ENCODE measurements at regions of chr1 and their contacts with region 1.

Region 1: GRCh38 chr1:214637722-214638458 is 34.9 kb downstream of the CENPF start:
- DNase-seq: peak; percentile 46
- H3K4me3 ChIP-seq: no peak overlapping the region
- H3K27ac ChIP-seq: no peak overlapping the region
- H3K4me1 ChIP-seq: peaks cover 5% of the 10 kb centered on the region
- H3K27me3 ChIP-seq: no peaks in the 10 kb centered on the region
- CTCF ChIP-seq: peak; percentile 61 to 81

Region 2: GRCh38 chr1:214224611-214225354 is 413.1 kb before region 1 on chr1:
- CTCF ChIA-PET with region 1: no interaction called
- dilution Hi-C with region 1: no loop called
- in situ Hi-C with region 1: loop called in 1 of 2 experiments (anchors 25 kb)
- intact Hi-C with region 1: no loop called
- DNase-seq: no peak
- H3K4me3 ChIP-seq: peak overlapping the region in 1 of 3 experiments; percentile 26
- H3K27ac ChIP-seq: no peak overlapping the region
- H3K4me1 ChIP-seq: peaks cover 7% of the 10 kb centered on the region
- H3K27me3 ChIP-seq: no peaks in the 10 kb centered on the region
- CTCF ChIP-seq: no peak

Region 3: GRCh38 chr1:214537219-214537618 is 100.7 kb before region 1 on chr1:
- CTCF ChIA-PET with region 1: no interaction called
- dilution Hi-C with region 1: no loop called
- in situ Hi-C with region 1: no loop called
- intact Hi-C with region 1: no loop called
- DNase-seq: peak; percentile 36
- H3K4me3 ChIP-seq: no peak overlapping the region
- H3K27ac ChIP-seq: no peak overlapping the region
- H3K4me1 ChIP-seq: peaks cover 24% of the 10 kb centered on the region
- H3K27me3 ChIP-seq: no peaks in the 10 kb centered on the region
- CTCF ChIP-seq: no peak